A549 (cell line): ENCODE measurements at regions of chr1 and their contacts with region 1.

Region 1: DNA sequence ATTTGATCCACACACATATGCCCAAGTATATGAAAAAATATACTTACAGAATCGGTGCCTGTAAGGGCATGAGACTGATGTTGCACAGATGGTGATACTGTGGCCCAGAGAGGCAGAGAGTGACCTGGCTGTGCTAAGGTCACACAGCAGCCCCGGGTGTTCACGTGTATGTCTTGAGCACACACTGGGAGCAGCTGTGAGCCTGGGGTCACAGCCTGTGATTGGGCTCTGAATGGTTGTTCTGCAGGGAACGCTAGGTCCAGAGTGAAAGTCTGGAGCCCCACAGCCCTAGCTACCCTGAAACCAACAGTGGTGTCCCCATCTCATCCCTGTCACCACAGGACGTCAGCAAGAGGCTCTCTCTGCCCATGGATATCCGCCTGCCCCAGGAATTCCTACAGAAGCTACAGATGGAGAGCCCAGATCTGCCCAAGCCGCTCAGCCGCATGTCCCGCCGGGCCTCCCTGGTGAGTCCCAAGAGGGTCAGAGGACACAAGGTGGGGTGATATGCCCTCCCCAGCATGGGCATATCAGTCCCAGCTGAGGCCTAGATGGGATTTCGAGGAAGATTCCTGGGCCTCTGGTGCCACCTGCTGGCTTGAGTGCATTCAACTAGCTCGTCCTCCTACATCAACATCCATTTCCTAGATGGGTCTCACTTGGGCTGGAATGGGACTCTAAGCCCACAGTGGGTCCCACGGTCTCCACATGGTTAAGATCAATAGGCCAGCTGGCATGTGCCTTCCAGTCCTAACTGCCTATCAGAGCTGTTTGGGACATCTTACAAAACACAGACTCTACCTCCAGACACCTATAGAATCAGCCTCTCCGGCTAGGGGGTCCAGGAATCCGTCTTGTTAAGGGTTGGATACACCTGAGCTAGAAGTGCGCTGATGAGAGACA is 19.7 kb downstream of the CDK18 start:
- DNase-seq: peak; percentile 71 to 87
- ATAC-seq: peak; percentile 65 to 81
- H3K4me3 ChIP-seq: no peak overlapping the region
- H3K27ac ChIP-seq: no peak overlapping the region
- H3K4me1 ChIP-seq: 0 out of 3 replicates have a peak, but pooled peaks cover 6% of the 10 kb centered on the region
- CTCF ChIP-seq: peak; percentile 91
- EP300 ChIP-seq: no peak
- POLR2A ChIP-seq: no peak
- RAD21 ChIP-seq: peak; percentile 95

Region 2: GRCh38 chr1:205091043-205091740 is 432.9 kb before region 1 on chr1:
- CTCF ChIA-PET with region 1: no interaction called
- POLR2A ChIA-PET with region 1: no interaction called
- DNase-seq: no peak
- ATAC-seq: no peak
- H3K4me3 ChIP-seq: no peak overlapping the region
- H3K27ac ChIP-seq: no peak overlapping the region
- H3K4me1 ChIP-seq: no peaks in the 10 kb centered on the region
- CTCF ChIP-seq: no peak
- EP300 ChIP-seq: no peak
- POLR2A ChIP-seq: no peak
- RAD21 ChIP-seq: no peak

Region 3: GRCh38 chr1:205121660-205122488 is 402.3 kb before region 1 on chr1 and contains the start of gene RBBP5:
- CTCF ChIA-PET with region 1: no interaction called
- POLR2A ChIA-PET with region 1: no interaction called
- DNase-seq: peak; percentile 98 to 99
- ATAC-seq: peak; percentile 100
- H3K4me3 ChIP-seq: peak within 1 kb of the TSS; percentile 92
- H3K27ac ChIP-seq: peak within 1 kb of the TSS; percentile 89 to 96
- H3K4me1 ChIP-seq: peaks cover 21% of the 10 kb centered on the region
- CTCF ChIP-seq: peak; percentile 88
- EP300 ChIP-seq: 0 out of 5 replicates have a peak, but pooled peaks of 1 of the 2 experiments have one; percentile 21
- POLR2A ChIP-seq: peak; percentile 86
- RAD21 ChIP-seq: peak; percentile 64 to 67
- polyA plus RNA-seq, gene RBBP5: 18.6 and 21.8 TPM in 2 replicates

Region 4: DNA sequence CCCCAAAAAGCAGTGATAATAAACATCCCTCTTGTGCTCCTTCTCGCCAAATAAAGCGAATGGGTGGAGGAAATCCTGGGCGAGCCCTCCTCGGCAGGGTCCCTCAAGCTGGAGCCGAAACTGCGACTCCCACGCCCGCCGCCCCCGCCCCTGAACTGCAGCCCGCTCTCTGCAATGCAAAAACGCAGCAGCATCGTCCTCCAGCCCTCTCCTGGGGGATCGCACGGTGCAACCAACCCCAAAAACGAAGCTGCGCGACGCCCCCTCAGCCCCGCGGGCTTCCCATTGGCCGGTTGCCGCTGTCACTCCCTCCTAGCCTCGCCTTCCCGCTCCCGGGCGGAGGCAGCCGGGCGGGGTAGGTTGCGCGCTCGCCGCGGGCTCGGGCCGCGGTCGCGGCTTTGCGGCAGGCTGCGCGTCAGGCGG is 296.5 kb before region 1 on chr1 and contains the start of gene TMCC2:
- CTCF ChIA-PET with region 1: interaction called, 19 read pairs
- POLR2A ChIA-PET with region 1: no interaction called
- DNase-seq: peak; percentile 84 to 97
- ATAC-seq: peak; percentile 83 to 92
- H3K4me3 ChIP-seq: peak within 1 kb of the TSS; percentile 69
- H3K27ac ChIP-seq: peak within 1 kb of the TSS; percentile 64 to 88
- H3K4me1 ChIP-seq: peaks cover 12% of the 10 kb centered on the region; the same call in 2 of the 3 replicates
- CTCF ChIP-seq: no peak
- EP300 ChIP-seq: no peak
- POLR2A ChIP-seq: peak; percentile 51
- RAD21 ChIP-seq: no peak; a peak in 1 of 5 replicates
- polyA plus RNA-seq, gene TMCC2: 1.6 and 1.7 TPM in 2 replicates

Region 5: GRCh38 chr1:205344066-205344928 is 179.8 kb before region 1 on chr1:
- CTCF ChIA-PET with region 1: interaction called, 315 read pairs
- POLR2A ChIA-PET with region 1: no interaction called
- DNase-seq: no peak
- ATAC-seq: peak; percentile 41 to 65
- H3K4me3 ChIP-seq: peak overlapping the region; percentile 66
- H3K27ac ChIP-seq: peak overlapping the region; percentile 64 to 86; a peak in 5 of 6 replicates
- H3K4me1 ChIP-seq: peaks cover 14% of the 10 kb centered on the region; the same call in 2 of the 3 replicates
- CTCF ChIP-seq: no peak
- EP300 ChIP-seq: no peak
- POLR2A ChIP-seq: no peak
- RAD21 ChIP-seq: no peak

Region 6: GRCh38 chr1:205407970-205408369 is 116.2 kb before region 1 on chr1:
- CTCF ChIA-PET with region 1: interaction called, 10 read pairs
- POLR2A ChIA-PET with region 1: no interaction called
- DNase-seq: no peak
- ATAC-seq: no peak
- H3K4me3 ChIP-seq: no peak overlapping the region
- H3K27ac ChIP-seq: no peak overlapping the region
- H3K4me1 ChIP-seq: no peaks in the 10 kb centered on the region
- CTCF ChIP-seq: no peak
- EP300 ChIP-seq: no peak
- POLR2A ChIP-seq: no peak
- RAD21 ChIP-seq: no peak

Region 7: GRCh38 chr1:205449750-205450443 is 74.2 kb before region 1 on chr1:
- CTCF ChIA-PET with region 1: interaction called, 16 read pairs
- POLR2A ChIA-PET with region 1: no interaction called
- DNase-seq: peak; percentile 35 to 69
- ATAC-seq: peak; percentile 40 to 68; a peak in 5 of 6 replicates
- H3K4me3 ChIP-seq: no peak overlapping the region
- H3K27ac ChIP-seq: peak overlapping the region; percentile 36 to 53; a peak in 5 of 6 replicates
- H3K4me1 ChIP-seq: peaks cover 12% of the 10 kb centered on the region
- CTCF ChIP-seq: no peak
- EP300 ChIP-seq: no peak
- POLR2A ChIP-seq: no peak
- RAD21 ChIP-seq: no peak

Region 8: GRCh38 chr1:205536759-205537361 is 12.7 kb after region 1 on chr1:
- CTCF ChIA-PET with region 1: interaction called, 52 read pairs
- POLR2A ChIA-PET with region 1: no interaction called
- DNase-seq: no peak
- ATAC-seq: peak in 1 of 2 experiments; percentile 15; a peak in 2 of 6 replicates
- H3K4me3 ChIP-seq: no peak overlapping the region
- H3K27ac ChIP-seq: no peak overlapping the region
- H3K4me1 ChIP-seq: peaks cover 7% of the 10 kb centered on the region; the same call in 1 of the 3 replicates
- CTCF ChIP-seq: no peak
- EP300 ChIP-seq: no peak
- POLR2A ChIP-seq: no peak
- RAD21 ChIP-seq: no peak

Region 9: DNA sequence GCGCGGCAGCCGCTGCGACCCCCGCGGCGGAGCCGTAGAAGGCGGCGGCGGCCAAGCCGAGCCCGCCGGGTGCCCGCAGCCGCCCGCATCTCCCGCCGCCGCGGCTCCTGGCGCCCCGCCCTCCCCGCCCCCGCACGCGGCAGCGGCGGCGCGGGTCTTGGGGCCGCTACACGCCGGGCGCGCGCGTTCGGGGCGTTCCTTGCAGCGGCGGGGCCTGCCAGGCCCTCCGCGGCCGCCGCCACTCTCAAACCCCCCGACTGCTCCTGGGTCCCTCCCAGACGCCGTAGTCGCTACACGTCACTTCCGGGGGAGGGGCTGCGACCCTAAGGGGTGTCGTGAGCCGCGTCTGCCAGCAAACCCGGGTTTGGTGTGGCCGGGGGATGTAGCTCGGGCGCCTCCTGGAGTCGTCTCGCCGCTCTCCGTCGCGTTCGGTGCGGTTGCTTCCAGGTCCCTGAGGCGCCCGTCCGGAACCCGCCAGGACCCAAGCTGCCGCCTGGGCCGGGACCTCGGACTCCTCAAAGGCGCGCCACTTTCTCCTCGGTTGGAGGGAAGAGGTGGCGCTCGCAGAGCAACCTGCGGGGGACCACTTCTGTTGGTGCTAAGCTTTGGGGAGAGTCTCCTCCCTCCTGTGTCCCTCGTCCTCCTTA is 107.7 kb after region 1 on chr1 and contains the start of gene ELK4:
- CTCF ChIA-PET with region 1: interaction called, 34 read pairs
- POLR2A ChIA-PET with region 1: interaction called, 4 read pairs
- DNase-seq: peak; percentile 94 to 98
- ATAC-seq: peak; percentile 91 to 94
- H3K4me3 ChIP-seq: peak within 1 kb of the TSS; percentile 91
- H3K27ac ChIP-seq: peak within 1 kb of the TSS; percentile 99
- H3K4me1 ChIP-seq: peaks cover 15% of the 10 kb centered on the region; the same call in 2 of the 3 replicates
- CTCF ChIP-seq: peak; percentile 57
- EP300 ChIP-seq: no peak
- POLR2A ChIP-seq: peak; percentile 94
- RAD21 ChIP-seq: peak; percentile 76 to 79
- polyA plus RNA-seq, gene ELK4: 11.9 and 12.7 TPM in 2 replicates

Region 10: DNA sequence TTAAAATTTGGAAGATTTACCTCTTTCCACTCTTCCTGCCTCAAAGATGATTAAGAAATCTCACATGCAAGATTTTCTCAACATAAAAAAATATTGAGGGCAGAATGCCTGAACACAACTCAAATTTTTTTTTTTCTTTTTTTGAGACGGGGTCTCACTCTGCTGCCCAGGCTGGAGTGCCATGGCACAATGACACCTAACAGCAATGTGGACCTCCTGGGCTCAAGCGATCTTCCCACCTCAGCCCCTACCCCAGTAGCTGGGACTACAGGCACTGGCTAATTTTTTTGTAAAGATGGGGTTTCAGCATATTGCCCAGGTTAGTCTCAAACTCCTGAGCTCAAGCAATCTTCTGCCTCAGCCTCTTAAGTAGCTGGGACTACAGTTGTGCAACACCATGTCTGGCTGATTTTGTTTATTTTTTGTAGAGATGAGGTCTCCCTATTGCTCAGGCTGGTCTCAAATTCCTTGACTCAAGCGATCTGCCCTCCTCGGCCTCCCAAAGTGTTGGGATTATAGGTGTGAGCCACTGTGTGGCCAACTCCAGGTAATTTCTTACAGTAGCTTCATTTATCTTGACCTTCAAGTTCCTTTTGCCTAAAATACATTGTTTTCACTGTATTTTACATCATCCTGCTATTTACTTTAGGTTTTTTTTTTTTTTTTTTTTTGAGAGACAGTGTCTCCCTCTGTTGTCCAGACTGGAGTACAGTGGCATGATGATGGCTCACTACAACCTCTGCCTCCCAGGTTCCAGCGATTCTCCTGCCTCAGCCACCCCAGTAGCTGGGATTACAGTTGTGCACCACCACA is 215.4 kb after region 1 on chr1:
- CTCF ChIA-PET with region 1: no interaction called
- POLR2A ChIA-PET with region 1: no interaction called
- DNase-seq: peak in 1 of 2 experiments; percentile 53
- ATAC-seq: peak; percentile 55 to 69; a peak in 5 of 6 replicates
- H3K4me3 ChIP-seq: no peak overlapping the region
- H3K27ac ChIP-seq: 0 out of 6 replicates have a peak overlapping the region, but pooled peaks of 1 of the 2 experiments have one; percentile 10
- H3K4me1 ChIP-seq: peaks cover 39% of the 10 kb centered on the region
- CTCF ChIP-seq: peak; percentile 17; the same call in 1 of the 3 replicates
- EP300 ChIP-seq: no peak
- POLR2A ChIP-seq: no peak
- RAD21 ChIP-seq: no peak

Region 11: GRCh38 chr1:205843036-205843859 is 319.1 kb after region 1 on chr1:
- CTCF ChIA-PET with region 1: no interaction called
- POLR2A ChIA-PET with region 1: no interaction called
- DNase-seq: no peak
- ATAC-seq: no peak
- H3K4me3 ChIP-seq: no peak overlapping the region
- H3K27ac ChIP-seq: no peak overlapping the region
- H3K4me1 ChIP-seq: peaks cover 3% of the 10 kb centered on the region; the same call in 1 of the 3 replicates
- CTCF ChIP-seq: no peak
- EP300 ChIP-seq: no peak
- POLR2A ChIP-seq: no peak
- RAD21 ChIP-seq: no peak